ENCODE measurements at regions of chr5 and their contacts with region 1.

Region 1: GRCh38 chr5:34474573-34475021 is 181.5 kb upstream of the RAI14 start:
- DNase-seq: peak; percentile 53
- H3K4me3 ChIP-seq: no peak overlapping the region
- H3K27ac ChIP-seq: no peak overlapping the region
- H3K4me1 ChIP-seq: no peaks in the 10 kb centered on the region
- H3K27me3 ChIP-seq: no peaks in the 10 kb centered on the region
- CTCF ChIP-seq: peak; percentile 98
- EP300 ChIP-seq: no peak
- RAD21 ChIP-seq: peak; percentile 81

Region 2: DNA sequence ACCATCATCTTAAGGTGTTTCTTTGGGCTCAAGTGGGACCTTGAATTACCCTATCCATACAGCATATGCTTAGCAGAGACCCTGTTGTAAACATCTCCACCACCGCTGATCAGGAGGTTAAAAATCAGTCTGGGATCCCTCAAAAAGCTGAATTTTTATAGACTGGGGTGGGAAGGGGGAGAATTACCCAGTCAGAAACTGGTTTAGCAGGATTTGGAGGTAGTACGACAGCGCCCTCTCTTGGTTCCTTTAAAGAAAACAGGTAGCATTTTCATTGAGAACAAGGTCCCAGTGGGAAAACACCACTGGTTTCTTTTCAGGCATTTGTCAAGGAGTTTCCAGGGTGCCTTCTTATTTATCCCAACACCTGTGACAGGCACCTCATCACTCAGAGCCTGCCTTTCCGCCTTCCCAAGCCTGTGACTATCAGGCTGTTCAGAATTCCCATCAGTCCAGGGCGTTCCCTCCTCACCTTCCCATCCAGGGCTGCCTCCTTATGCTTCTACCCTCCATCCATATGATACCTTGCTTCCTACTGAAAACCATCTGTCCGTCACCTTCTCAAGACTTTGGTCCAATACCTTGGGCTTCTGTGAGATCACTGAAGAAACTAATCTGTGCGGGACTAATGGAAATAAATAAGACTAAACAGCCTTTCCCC is 22.3 kb before region 1 on chr5:
- CTCF ChIA-PET with region 1: interaction called, 10 read pairs
- POLR2A ChIA-PET with region 1: no interaction called
- DNase-seq: no peak
- H3K4me3 ChIP-seq: no peak overlapping the region
- H3K27ac ChIP-seq: no peak overlapping the region
- H3K4me1 ChIP-seq: no peaks in the 10 kb centered on the region
- H3K27me3 ChIP-seq: no peaks in the 10 kb centered on the region
- CTCF ChIP-seq: peak; percentile 50
- EP300 ChIP-seq: no peak
- RAD21 ChIP-seq: peak; percentile 61

Measured in SK-N-SH (cell line).